Lower lobe of right lung (tissue), 2 donors: ENCODE measurements at regions of chr12 and their contacts with region 1.

Region 1: GRCh38 chr12:45183246-45183645 is 32.6 kb upstream of the ANO6 start:
- DNase-seq: no peak
- ATAC-seq: no peak
- H3K4me3 ChIP-seq: no peak overlapping the region
- H3K27ac ChIP-seq: no peak overlapping the region
- H3K4me1 ChIP-seq: no peaks in the 10 kb centered on the region
- H3K27me3 ChIP-seq: no peaks in the 10 kb centered on the region
- CTCF ChIP-seq: peak; percentile 43

Region 2: DNA sequence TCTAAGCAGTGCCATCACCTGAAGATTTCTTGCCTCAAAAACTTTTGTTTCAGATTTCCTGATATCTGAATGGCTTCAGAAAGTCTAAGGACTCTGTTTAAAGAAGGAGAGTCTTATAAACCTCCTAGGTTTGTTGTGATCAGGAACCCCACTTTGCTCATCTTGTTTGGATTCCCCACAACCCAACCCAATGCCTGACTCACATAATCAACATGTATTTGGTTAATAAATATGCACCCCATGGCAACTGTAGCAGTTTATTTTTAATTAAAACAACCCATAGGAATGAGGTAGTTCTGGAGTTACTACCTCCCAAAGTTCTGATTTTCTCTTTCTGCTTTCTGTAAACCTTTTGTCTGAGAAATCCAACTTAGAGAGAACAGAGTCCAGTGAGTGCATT is 183.9 kb before region 1 on chr12:
- intact Hi-C with region 1: no loop called
- DNase-seq: no peak
- ATAC-seq: no peak
- H3K4me3 ChIP-seq: no peak overlapping the region
- H3K27ac ChIP-seq: no peak overlapping the region
- H3K4me1 ChIP-seq: no peaks in the 10 kb centered on the region
- H3K27me3 ChIP-seq: no peaks in the 10 kb centered on the region
- CTCF ChIP-seq: no peak

Region 3: DNA sequence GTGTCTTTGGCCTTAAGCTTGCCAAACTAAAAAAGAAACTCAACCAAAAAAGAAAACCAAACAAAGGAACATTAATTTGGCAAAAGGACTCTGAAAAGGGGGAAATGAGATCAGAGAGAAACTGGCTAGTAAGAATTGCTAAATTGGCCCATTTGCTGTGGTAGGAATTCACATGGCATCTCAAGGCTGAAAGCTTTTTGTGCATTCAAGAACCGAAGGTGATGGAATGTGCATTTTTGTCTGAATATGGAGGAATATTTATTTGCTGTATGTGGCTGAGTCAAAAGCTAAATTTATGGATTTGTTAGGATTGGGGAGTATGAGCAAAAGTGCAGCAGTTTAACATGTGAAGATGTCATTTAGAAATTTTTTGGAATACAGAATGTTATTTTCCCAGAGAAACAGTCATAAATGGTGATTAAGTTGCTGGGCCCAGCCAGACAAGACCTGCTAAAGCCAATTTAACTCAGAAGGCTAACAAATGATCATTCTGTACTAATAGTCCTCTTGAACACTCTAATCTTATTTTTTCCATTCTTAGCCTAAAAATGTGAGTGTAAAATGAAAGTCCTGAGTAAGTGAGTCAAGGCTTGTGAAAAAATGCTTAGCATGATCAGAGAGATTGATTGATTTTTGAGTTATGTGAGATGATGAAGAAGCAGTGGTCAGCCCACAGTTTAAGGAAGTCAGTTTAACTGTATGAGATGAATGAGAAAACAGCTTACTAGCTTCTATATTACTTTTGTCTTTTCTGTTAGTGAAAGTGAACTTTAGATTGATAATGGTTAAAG is 126.8 kb after region 1 on chr12:
- intact Hi-C with region 1: no loop called
- DNase-seq: no peak
- ATAC-seq: no peak
- H3K4me3 ChIP-seq: no peak overlapping the region
- H3K27ac ChIP-seq: peak overlapping the region; percentile 38
- H3K4me1 ChIP-seq: peaks cover 11% of the 10 kb centered on the region
- H3K27me3 ChIP-seq: no peaks in the 10 kb centered on the region
- CTCF ChIP-seq: no peak

Region 4: GRCh38 chr12:45388545-45388944 is 205.3 kb after region 1 on chr12:
- intact Hi-C with region 1: loop called (anchors 10 kb)
- DNase-seq: no peak
- ATAC-seq: peak in 1 of 2 donors; percentile 51
- H3K4me3 ChIP-seq: no peak overlapping the region
- H3K27ac ChIP-seq: no peak overlapping the region
- H3K4me1 ChIP-seq: no peaks in the 10 kb centered on the region
- H3K27me3 ChIP-seq: no peaks in the 10 kb centered on the region
- CTCF ChIP-seq: peak; percentile 54